ENCODE measurements at regions of chr22 and their contacts with region 1.

Region 1: DNA sequence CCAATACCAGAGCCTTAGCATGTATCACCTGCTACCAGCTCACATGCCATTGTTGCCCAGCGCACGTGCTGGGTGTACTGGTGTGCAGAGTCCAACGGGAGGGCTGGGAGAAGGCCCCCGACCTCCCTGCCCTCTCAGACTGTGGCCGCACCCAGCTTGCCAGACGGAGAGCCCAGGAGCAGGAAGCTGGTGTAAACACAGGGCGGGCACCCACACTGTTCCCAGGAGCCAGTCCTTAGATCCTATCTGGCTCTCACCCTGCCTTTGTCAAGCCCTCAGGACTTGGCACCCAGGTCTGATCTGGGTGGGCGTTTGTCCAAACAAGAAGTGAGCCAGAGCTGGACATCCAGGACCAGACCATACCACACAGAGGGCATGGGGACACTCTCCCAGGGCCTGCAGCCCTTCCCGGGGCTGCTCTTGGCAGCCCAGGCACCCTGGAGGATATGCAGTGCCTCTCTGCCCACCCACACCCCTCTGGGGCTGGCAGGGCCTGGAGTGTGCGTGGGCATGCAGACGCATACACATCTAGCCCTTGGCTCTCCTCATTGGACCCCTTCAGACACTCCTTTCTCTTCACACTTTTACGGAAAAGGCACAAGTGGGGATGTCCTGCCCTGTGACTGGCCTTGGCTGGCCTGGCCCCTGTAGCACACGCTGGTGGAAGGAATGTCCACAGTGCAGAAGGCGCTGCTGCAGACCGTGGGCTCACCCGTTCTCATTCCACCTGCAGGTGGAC is 19.9 kb upstream of the CLDN5 start:
- DNase-seq: peak in 1 of 5 donors; percentile 30
- H3K4me3 ChIP-seq: no peak overlapping the region
- H3K27ac ChIP-seq: no peak overlapping the region
- H3K4me1 ChIP-seq: no peaks in the 10 kb centered on the region
- H3K27me3 ChIP-seq: no peaks in the 10 kb centered on the region
- CTCF ChIP-seq: no peak

Region 2: GRCh38 chr22:19232623-19233022 is 311.5 kb before region 1 on chr22:
- intact Hi-C with region 1: no loop called
- DNase-seq: no peak
- H3K4me3 ChIP-seq: no peak overlapping the region
- H3K27ac ChIP-seq: no peak overlapping the region
- H3K4me1 ChIP-seq: no peaks in the 10 kb centered on the region
- H3K27me3 ChIP-seq: no peaks in the 10 kb centered on the region
- CTCF ChIP-seq: no peak

Region 3: GRCh38 chr22:19691721-19692341 is 147.7 kb after region 1 on chr22:
- intact Hi-C with region 1: loop called (anchors 5 kb)
- DNase-seq: peak in 3 of 5 donors; percentile 56 to 70 (median 66)
- H3K4me3 ChIP-seq: peak overlapping the region; percentile 2 to 12 (median 2)
- H3K27ac ChIP-seq: no peak overlapping the region
- H3K4me1 ChIP-seq: peaks cover 0 to 3% (median 0%) of the 10 kb centered on the region in 3 donors
- H3K27me3 ChIP-seq: no peaks in the 10 kb centered on the region
- CTCF ChIP-seq: no peak